ENCODE measurements at regions of chr11 and their contacts with region 1.

Region 1: DNA sequence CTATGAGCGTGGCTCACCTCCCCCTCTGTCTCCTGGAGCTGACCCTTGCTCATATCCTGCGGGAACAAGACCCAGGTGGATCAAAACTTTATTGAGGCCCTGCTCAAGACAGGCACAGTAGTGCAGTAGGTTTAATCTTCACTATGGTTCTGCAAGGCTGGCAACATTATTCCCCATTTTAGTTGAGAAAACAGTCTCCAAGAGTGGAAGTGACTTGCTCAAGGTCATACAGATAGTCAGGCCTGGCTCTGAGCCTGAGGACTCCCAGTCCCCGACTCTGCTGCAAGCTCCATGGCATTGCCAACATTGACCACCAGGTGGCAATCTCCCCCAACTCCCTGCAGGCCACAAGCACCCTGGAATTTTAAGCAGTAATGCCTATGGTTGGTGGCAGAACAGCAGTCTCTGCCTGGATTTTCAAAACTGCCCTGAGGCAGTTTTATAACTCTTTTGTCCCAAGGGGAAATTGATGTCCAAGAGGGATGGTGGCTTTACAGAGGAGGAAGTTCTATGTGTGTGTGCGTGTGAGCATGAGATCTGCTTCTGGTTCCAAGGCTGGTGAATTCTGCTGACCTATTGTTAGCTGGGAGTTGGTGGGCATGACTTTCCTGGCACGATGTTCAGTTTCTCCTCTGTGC is 34.1 kb downstream of the NEU3 start:
- DNase-seq: peak; percentile 79 to 86
- ATAC-seq: peak; percentile 81 to 94 (median 90)
- H3K4me3 ChIP-seq: no peak overlapping the region
- H3K27ac ChIP-seq: no peak overlapping the region
- H3K4me1 ChIP-seq: peaks cover 34% of the 10 kb centered on the region
- H3K27me3 ChIP-seq: no peaks in the 10 kb centered on the region
- CTCF ChIP-seq: peak; percentile 96

Region 2: DNA sequence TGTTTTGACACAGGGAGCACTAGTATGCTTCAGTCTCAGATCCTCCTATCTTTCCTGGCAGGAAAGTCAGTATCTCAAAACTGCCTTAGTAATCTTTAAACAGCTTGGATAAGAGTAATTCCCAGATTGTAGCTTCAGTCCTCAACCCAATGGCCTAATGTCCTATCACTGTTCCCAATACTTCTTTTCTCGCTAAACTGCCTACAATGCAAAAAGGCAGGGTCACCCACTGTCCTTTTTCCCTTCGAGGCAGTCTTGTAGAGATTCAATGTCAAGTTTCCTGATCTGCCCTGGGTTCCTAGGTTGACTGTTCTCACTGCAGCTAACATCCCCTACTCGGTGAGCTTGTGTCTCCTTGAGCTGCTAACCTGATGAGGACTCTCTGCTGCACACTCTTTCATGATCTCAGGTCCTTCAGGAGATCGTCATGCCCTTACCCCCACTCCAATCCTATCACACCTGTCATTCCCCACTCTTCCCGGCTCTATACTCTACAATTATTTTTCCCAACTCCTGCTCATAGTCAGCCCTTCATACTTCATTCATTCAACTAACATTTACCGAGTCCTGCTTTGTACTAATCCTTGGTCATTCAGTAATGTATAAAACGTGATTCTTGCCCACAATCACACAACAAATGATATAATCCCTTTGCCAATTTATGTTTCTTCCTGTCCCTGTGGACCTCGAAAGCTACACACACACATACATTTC is 853.0 kb before region 1 on chr11:
- intact Hi-C with region 1: no loop called
- DNase-seq: no peak
- ATAC-seq: no peak
- H3K4me3 ChIP-seq: peak overlapping the region; percentile 90
- H3K27ac ChIP-seq: peak overlapping the region; percentile 91
- H3K4me1 ChIP-seq: peaks cover 45% of the 10 kb centered on the region
- H3K27me3 ChIP-seq: no peaks in the 10 kb centered on the region
- CTCF ChIP-seq: no peak

Region 3: DNA sequence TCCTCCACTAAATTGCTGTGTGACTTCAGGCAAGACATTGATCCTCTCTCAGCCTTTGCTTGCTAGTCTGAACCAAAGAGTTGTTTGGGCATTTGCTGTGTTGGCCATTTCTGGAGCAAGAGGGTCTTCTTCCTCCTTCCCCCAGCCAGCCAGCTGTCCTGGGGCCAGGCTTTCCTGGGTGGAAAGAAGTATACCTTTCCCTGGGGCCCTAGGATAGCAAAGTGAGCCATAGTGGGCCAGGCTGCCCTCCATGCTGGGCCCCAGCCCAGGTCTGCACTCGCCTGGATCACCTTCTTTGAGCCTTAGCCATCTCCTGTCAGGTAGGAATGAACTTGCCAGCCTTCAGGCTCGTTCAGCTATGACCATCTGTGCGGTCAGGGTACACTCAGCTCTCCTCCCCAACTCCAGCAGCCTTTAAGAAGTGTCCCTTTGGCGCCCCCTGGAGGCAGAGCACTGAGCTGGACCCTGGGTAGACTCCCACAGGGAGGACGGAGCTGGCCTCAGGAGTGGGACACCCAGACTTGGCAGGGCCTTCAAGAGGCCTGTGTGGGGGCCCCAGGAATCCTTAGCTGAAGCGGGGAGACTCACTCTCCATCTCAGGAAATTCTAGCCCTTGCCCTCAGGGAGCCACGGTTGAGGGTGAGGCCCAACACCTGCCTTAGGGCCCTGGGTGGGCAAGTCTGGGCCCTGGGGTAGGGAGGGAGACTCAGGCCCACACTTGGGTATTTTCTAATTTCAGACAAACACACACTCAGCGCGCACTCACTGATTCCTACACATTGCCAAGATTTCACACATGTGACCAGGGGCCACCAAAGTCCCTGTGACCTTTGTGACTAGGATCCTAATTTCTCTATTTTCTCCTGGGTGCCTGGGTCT is 182.0 kb after region 1 on chr11:
- intact Hi-C with region 1: loop called in 1 of 2 experiments (anchors 5 kb)
- DNase-seq: peak; percentile 87 to 92
- ATAC-seq: peak; percentile 88 to 95 (median 92)
- H3K4me3 ChIP-seq: no peak overlapping the region
- H3K27ac ChIP-seq: no peak overlapping the region
- H3K4me1 ChIP-seq: no peaks in the 10 kb centered on the region
- H3K27me3 ChIP-seq: peaks cover 0 to 4% (median 0%) of the 10 kb centered on the region in 3 donors
- CTCF ChIP-seq: peak; percentile 85

Region 4: DNA sequence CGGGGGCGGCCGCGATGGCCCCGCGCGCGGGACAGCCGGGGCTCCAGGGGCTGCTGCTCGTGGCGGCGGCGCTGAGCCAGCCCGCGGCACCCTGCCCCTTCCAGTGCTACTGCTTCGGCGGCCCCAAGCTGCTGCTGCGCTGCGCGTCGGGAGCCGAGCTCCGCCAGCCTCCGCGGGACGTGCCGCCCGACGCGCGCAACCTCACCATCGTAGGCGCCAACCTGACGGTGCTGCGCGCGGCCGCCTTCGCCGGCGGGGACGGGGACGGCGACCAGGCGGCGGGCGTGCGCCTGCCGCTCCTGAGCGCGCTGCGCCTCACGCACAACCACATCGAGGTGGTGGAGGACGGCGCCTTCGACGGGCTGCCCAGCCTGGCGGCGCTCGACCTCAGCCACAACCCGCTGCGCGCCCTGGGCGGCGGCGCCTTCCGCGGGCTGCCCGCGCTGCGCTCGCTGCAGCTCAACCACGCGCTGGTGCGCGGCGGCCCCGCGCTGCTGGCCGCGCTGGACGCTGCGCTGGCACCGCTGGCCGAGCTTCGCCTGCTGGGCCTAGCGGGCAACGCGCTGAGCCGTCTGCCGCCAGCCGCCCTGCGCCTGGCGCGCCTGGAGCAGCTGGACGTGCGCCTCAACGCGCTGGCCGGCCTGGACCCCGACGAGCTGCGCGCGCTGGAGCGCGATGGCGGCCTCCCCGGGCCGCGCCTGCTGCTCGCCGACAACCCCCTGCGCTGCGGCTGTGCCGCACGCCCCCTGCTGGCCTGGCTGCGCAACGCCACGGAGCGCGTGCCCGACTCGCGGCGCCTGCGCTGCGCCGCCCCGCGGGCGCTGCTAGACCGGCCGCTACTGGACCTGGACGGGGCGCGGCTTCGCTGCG is 218.4 kb after region 1 on chr11:
- intact Hi-C with region 1: loop called in 1 of 2 experiments (anchors 10 kb)
- DNase-seq: peak; percentile 84 to 91
- ATAC-seq: peak; percentile 95 to 98 (median 96)
- H3K4me3 ChIP-seq: peak overlapping the region; percentile 53
- H3K27ac ChIP-seq: no peak overlapping the region
- H3K4me1 ChIP-seq: peaks cover 3% of the 10 kb centered on the region
- H3K27me3 ChIP-seq: peaks cover 0 to 29% (median 14%) of the 10 kb centered on the region in 3 donors
- CTCF ChIP-seq: peak; percentile 95

Region 5: GRCh38 chr11:75248690-75249268 is 225.9 kb after region 1 on chr11:
- intact Hi-C with region 1: loop called (anchors 2 to 10 kb)
- DNase-seq: peak; percentile 85 to 93
- ATAC-seq: peak; percentile 88 to 98 (median 94)
- H3K4me3 ChIP-seq: no peak overlapping the region
- H3K27ac ChIP-seq: no peak overlapping the region
- H3K4me1 ChIP-seq: peaks cover 4% of the 10 kb centered on the region
- H3K27me3 ChIP-seq: no peaks in the 10 kb centered on the region
- CTCF ChIP-seq: peak; percentile 99

Measured in psoas muscle (tissue), 8 donors.